ENCODE measurements at regions of chr2 and their contacts with region 1.

Region 1: GRCh38 chr2:226799181-226799975 is at the start of gene IRS1:
- DNase-seq: peak; percentile 83 to 92
- ATAC-seq: peak; percentile 78
- H3K4me3 ChIP-seq: peak within 1 kb of the TSS; percentile 48 to 79
- H3K27ac ChIP-seq: peak within 1 kb of the TSS; percentile 78 to 87
- H3K4me1 ChIP-seq: no peaks in the 10 kb centered on the region
- H3K27me3 ChIP-seq: no peaks in the 10 kb centered on the region
- total RNA-seq, gene IRS1: 13.8 to 16.6 TPM

Region 2: DNA sequence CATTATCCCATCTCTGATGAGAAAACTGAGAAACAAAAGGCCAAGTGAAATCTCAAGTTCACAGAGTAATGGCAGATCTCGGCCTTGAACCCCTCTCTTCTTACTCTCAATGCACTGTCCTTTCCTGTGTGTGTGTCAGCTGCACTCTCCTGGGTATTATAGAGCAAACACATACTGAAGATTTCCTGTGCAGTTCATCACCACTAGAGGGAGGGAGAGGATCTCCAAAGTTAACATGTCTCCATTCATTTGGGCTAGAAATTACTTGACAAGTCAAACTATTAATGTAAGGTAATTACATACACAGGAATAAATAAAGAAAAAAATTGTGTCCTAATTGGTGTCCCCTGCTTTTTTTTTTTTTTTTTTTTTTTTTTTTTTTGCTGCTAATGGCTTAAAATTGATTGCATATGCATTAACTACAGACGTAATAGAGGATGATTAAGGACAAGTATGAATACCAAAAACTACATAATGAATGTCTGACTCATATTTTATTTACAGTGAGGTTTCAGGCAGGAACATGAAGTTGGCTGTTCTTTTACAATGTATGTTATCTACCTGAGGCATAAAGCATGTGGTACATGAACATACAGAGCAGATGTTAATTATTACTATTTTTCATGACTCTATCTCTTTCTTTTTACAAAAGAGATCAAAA is 1130.6 kb before region 1 on chr2:
- intact Hi-C with region 1: loop called (anchors 5 kb)
- DNase-seq: no peak
- ATAC-seq: no peak
- H3K4me3 ChIP-seq: no peak overlapping the region
- H3K27ac ChIP-seq: no peak overlapping the region
- H3K4me1 ChIP-seq: no peaks in the 10 kb centered on the region
- H3K27me3 ChIP-seq: no peaks in the 10 kb centered on the region

Region 3: DNA sequence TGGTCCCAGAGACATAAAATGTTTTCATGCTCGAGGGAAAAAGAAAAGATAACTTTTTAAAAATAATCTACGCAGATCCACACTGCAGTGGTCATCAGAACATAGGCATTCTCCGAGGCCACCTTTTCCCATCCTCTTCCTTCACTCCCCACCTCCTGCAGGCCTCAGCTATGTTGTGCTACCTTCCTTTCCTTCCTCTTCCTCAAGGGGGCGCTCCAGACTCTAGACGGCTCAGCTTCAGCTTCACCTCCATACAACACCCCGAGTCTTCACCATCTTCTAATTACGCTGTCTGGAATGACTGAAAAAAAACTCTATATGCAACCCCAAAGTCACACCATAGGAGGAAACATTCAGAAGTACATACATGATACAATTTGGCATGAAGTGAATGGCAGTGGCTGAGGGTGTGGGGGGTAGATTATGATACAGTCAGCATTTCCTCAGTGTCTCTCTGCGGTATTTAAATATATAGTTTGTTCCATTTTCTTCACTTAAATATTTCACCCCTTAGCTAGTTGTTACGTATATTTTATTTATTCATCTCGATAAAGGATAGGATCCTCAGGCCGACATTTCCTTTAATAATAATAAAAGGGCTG is 583.4 kb before region 1 on chr2:
- intact Hi-C with region 1: loop called in 1 of 2 experiments (anchors 10 kb)
- DNase-seq: no peak
- ATAC-seq: no peak
- H3K4me3 ChIP-seq: no peak overlapping the region
- H3K27ac ChIP-seq: no peak overlapping the region
- H3K4me1 ChIP-seq: peaks cover 0 to 3% of the 10 kb centered on the region in 2 donors
- H3K27me3 ChIP-seq: no peaks in the 10 kb centered on the region

Region 4: DNA sequence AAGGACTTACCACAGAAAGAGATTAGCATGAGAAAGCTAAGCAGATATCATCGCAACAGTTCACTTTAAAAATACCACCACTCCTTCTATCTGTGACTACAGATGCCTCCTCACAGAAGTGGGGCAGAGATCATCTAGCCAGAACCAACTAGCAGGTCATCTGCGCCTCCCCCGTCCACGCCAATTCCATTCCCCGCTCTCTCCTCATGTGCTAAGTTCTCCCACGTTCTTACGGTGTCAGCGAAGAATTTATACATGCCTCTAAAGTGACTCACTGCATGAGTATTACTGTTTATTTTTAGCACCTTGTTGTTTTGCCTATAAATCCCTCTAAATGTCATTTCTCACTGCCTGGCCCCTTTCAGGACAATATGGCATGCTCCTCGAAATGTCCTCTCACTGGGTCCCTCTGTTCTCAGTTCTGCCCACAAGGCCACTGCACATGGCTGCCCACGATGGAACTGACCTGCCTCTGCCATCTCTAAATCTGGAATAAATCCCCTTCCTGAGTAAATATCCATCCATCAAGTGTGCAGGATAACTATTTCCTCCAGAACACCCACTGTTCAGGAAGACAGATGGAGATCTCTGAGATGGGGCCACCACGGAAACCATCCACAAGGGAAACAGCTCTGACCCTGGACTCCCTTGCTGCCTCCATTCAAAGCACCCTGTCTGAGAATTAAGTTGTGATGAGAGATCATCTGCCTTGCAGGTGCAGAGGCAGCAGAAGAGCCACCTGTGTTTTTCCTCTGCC is 137.4 kb before region 1 on chr2:
- intact Hi-C with region 1: loop called (anchors 5 kb)
- DNase-seq: peak in 1 of 2 donors; percentile 63
- ATAC-seq: peak; percentile 77
- H3K4me3 ChIP-seq: no peak overlapping the region
- H3K27ac ChIP-seq: peak overlapping the region; percentile 44 to 82
- H3K4me1 ChIP-seq: peaks cover 4 to 8% of the 10 kb centered on the region in 2 donors
- H3K27me3 ChIP-seq: no peaks in the 10 kb centered on the region

Region 5: DNA sequence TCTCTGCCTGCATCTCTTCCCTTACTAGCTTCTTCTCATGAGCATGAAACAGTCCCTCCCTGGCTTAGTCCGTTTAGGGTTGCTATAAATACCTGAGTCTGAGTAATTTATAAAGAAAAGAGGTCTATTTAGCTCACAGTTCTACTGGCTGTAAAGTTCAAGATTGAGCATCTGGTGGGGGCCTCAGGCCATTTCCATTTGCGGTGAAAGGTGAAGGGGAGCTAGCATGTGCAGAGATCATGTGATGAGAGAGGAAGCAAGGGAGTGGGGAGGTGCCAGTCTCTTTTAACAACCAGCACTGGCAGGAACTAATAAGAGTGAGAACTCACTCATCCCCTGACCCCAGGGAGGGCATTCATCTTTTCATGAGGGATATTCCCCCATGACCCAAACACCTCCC is 63.2 kb after region 1 on chr2:
- intact Hi-C with region 1: no loop called
- DNase-seq: no peak
- ATAC-seq: no peak
- H3K4me3 ChIP-seq: no peak overlapping the region
- H3K27ac ChIP-seq: no peak overlapping the region
- H3K4me1 ChIP-seq: no peaks in the 10 kb centered on the region
- H3K27me3 ChIP-seq: no peaks in the 10 kb centered on the region

Region 6: GRCh38 chr2:226984750-226985582 is 185.6 kb after region 1 on chr2:
- intact Hi-C with region 1: loop called (anchors 2 to 5 kb)
- DNase-seq: no peak
- ATAC-seq: peak; percentile 86
- H3K4me3 ChIP-seq: no peak overlapping the region
- H3K27ac ChIP-seq: peak overlapping the region in 1 of 2 donors; percentile 6
- H3K4me1 ChIP-seq: peaks cover 0 to 2% of the 10 kb centered on the region in 2 donors
- H3K27me3 ChIP-seq: no peaks in the 10 kb centered on the region

Measured in aorta (tissue), 5 donors.